WTC11 (cell line): ENCODE measurements at regions of chr4 and their contacts with region 1.

Region 1: GRCh38 chr4:112523764-112524505 is 8.0 kb upstream of the NEUROG2 start:
- DNase-seq: peak; percentile 96
- ATAC-seq: peak; percentile 87
- H3K4me3 Mint-ChIP-seq: peak overlapping the region; percentile 85
- H3K27ac Mint-ChIP-seq: no peak overlapping the region
- H3K4me1 Mint-ChIP-seq: peaks cover 43% of the 10 kb centered on the region
- H3K27me3 Mint-ChIP-seq: peaks cover 69% of the 10 kb centered on the region
- CTCF ChIP-seq: peak; percentile 85

Region 2: DNA sequence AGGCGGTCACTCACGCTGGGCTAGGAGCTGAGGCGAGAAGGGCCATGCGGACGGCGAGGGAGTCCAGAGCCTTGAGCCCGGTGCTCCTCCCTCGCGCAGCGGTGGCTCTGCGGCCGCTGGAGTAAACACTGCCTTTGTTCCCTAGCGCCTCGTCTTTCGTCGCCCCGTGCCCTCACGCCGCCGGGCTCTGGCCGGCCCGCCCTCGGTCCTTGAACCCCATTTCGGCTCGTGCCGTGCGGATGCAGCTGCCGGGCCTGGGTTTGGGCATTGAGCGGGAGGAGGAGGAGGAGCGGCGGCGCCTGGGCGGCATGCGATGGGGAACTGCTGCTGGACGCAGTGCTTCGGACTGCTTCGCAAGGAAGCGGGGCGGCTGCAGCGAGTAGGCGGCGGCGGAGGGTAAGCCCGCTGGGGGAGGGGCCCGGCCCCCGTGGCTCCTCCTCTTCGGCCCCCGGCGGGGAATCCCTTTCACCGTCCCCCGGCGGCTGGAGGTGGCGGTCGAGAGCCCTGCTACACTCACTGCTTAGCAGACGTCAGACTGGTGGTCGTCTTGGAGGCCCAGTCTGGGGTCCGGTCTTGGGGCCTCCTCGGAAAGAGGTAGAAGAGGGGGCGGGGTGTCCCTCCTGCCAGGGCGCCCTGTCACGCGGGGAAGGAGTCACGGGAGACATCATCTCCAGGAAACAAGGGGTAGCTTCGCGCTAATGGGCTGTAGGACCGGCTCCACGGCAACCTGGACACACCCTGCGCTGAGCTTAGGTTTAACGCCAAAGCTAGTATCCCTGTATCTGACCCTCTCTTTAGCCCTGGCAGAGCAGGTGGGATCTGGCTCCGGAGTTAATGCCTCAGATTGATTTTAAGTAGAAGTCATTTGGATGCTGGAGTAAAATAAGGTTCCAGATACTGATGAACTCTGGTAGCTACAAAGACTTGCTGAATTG is 291.9 kb before region 1 on chr4 and contains the start of gene AP1AR:
- CTCF ChIA-PET with region 1: interaction called, 10 read pairs
- POLR2A ChIA-PET with region 1: no interaction called
- DNase-seq: peak; percentile 93
- ATAC-seq: peak; percentile 83
- H3K4me3 Mint-ChIP-seq: peak within 1 kb of the TSS; percentile 92
- H3K27ac Mint-ChIP-seq: peak within 1 kb of the TSS; percentile 99
- H3K4me1 Mint-ChIP-seq: peaks cover 28% of the 10 kb centered on the region
- H3K27me3 Mint-ChIP-seq: no peaks in the 10 kb centered on the region; the same call in 1 of the 2 replicates
- CTCF ChIP-seq: no peak
- total RNA-seq, gene AP1AR: 22.4 to 26.1 TPM (median 23.1 TPM) in 3 replicates

Region 3: DNA sequence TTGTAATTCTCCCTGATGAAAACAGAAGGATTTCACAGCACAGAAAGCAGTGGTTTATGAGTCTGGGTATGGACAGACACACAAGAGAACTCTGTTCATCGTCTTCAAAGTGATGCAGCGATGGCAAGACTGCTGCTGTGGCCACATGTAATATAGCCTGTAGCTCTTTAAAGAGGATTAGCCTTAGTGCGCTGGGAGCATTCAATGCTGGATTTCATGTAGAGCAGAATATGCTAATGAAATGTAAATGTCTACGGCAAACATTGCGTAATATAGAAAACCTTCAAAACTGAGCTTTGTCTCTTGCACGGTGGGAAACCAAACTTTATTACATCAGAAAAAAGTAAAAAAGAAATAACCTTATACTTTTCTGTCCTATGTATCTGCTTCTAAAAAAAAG is 183.9 kb before region 1 on chr4:
- CTCF ChIA-PET with region 1: interaction called, 24 read pairs
- POLR2A ChIA-PET with region 1: interaction called, 5 read pairs
- DNase-seq: no peak
- ATAC-seq: peak; percentile 67
- H3K4me3 Mint-ChIP-seq: no peak overlapping the region
- H3K27ac Mint-ChIP-seq: no peak overlapping the region
- H3K4me1 Mint-ChIP-seq: peaks cover 50% of the 10 kb centered on the region
- H3K27me3 Mint-ChIP-seq: peaks cover 10% of the 10 kb centered on the region
- CTCF ChIP-seq: no peak

Region 4: DNA sequence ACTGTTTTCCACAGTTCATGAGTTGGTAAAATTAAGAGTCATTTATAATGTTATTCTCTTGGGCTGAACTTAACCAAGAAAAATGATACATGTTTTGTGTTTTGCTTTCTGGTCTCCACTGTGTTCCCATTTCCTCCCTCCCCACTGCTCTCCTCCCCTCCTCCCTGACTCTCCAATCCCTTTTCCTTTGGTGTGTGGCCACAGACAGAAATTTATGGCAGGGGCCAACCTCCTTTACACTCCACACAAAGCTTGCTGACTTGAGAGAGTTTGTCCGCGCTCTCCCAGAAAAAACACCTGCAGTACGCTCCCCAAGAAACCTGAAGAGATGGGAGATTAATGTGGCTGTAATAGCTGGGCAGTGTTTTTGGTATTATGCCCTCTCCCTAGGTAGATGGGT is 137.9 kb before region 1 on chr4:
- CTCF ChIA-PET with region 1: interaction called, 11 read pairs
- POLR2A ChIA-PET with region 1: no interaction called
- DNase-seq: no peak
- ATAC-seq: no peak
- H3K4me3 Mint-ChIP-seq: no peak overlapping the region
- H3K27ac Mint-ChIP-seq: no peak overlapping the region
- H3K4me1 Mint-ChIP-seq: peaks cover 4% of the 10 kb centered on the region; the same call in 1 of the 2 replicates
- H3K27me3 Mint-ChIP-seq: peaks cover 1% of the 10 kb centered on the region
- CTCF ChIP-seq: no peak

Region 5: GRCh38 chr4:112509243-112510141 is 14.4 kb before region 1 on chr4:
- CTCF ChIA-PET with region 1: interaction called, 91 read pairs
- POLR2A ChIA-PET with region 1: interaction called, 3 read pairs
- DNase-seq: peak; percentile 35
- ATAC-seq: peak; percentile 7
- H3K4me3 Mint-ChIP-seq: peak overlapping the region; percentile 59
- H3K27ac Mint-ChIP-seq: no peak overlapping the region
- H3K4me1 Mint-ChIP-seq: peaks cover 41% of the 10 kb centered on the region
- H3K27me3 Mint-ChIP-seq: peaks cover 97% of the 10 kb centered on the region
- CTCF ChIP-seq: no peak

Region 6: DNA sequence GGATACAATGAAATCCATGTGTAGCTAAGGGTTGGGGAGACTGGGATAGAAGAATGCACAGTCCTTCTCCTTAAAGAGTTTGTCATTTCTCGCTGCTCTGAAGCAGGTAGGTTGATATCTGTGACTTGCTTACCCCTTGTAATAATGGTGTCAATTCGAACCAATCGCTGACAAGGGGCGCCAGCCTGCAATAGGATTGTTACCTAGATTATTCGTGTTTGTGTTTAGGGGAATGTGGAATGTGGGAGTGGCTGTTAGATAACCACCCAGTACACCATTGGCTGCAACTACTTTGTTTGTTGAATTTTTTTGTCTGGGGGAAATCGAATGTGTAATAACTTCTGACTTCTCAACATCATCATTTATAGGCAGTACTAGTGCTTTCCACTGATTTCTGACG is 254.6 kb after region 1 on chr4:
- CTCF ChIA-PET with region 1: no interaction called
- POLR2A ChIA-PET with region 1: no interaction called
- DNase-seq: no peak
- ATAC-seq: peak; percentile 29; the same call in 1 of the 2 replicates
- H3K4me3 Mint-ChIP-seq: no peak overlapping the region
- H3K27ac Mint-ChIP-seq: peak overlapping the region; percentile 33
- H3K4me1 Mint-ChIP-seq: peaks cover 21% of the 10 kb centered on the region
- H3K27me3 Mint-ChIP-seq: no peaks in the 10 kb centered on the region
- CTCF ChIP-seq: no peak